Caco-2 (cell line): ENCODE measurements at regions of chr6 and their contacts with region 1.

Region 1: GRCh38 chr6:15245361-15246216 is at the start of gene JARID2:
- DNase-seq: peak; percentile 97 to 99
- H3K4me3 ChIP-seq: peak within 1 kb of the TSS; percentile 97
- H3K4me3 Mint-ChIP-seq: peak within 1 kb of the TSS; percentile 85
- H3K27ac Mint-ChIP-seq: peak within 1 kb of the TSS; percentile 65
- H3K4me1 ChIP-seq: peaks cover 6% of the 10 kb centered on the region
- H3K4me1 Mint-ChIP-seq: no peaks in the 10 kb centered on the region
- H3K27me3 ChIP-seq: no peaks in the 10 kb centered on the region
- H3K27me3 Mint-ChIP-seq: no peaks in the 10 kb centered on the region
- CTCF ChIP-seq: no peak
- total RNA-seq, gene JARID2: 17.0 and 18.3 TPM in 2 replicates

Region 2: DNA sequence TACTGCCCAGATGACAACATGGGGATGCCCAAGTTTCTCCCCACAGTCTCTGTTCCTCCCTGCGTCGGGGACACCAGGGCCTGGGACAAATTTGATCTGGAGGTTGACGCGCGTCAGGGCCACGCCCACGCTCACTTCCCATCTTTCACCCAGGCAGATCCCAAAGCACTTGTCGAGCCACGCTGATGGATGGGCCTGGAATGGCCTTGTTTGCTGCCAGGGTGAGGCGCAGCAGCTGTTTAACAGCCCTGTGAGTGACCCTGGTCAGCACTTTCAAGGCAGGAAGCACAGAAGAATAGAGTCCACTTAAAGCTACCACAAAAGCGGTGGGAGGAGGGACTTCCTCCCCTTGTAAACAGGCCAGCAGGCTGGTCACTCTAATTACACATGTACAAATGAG is 324.4 kb before region 1 on chr6:
- CTCF ChIA-PET with region 1: no interaction called
- POLR2A ChIA-PET with region 1: no interaction called
- intact Hi-C with region 1: no loop called
- DNase-seq: no peak
- H3K4me3 ChIP-seq: no peak overlapping the region
- H3K4me3 Mint-ChIP-seq: no peak overlapping the region
- H3K27ac Mint-ChIP-seq: no peak overlapping the region
- H3K4me1 ChIP-seq: no peaks in the 10 kb centered on the region
- H3K4me1 Mint-ChIP-seq: no peaks in the 10 kb centered on the region
- H3K27me3 ChIP-seq: no peaks in the 10 kb centered on the region
- H3K27me3 Mint-ChIP-seq: no peaks in the 10 kb centered on the region
- CTCF ChIP-seq: no peak

Region 3: DNA sequence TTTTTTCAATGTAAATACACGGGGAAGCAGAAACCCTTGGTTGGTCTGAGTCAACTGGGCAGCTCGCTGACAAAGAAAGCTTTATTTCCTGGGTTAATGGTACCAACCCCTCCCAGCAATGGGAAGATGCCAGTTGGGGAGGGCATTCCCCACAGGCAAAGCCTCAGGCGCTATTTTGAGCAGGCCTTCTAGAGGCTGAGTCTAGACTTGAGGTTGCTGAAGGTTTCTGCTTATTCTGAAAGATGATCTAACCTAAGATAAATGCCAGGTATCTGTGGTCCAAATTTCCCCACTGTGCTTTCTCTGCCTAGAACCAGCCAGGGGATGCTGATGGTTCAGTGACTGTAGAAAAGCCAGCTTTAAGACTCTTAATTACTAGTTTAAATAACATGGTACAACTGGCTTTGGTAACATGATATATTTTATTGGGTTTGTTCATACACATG is 172.2 kb before region 1 on chr6:
- CTCF ChIA-PET with region 1: no interaction called
- POLR2A ChIA-PET with region 1: no interaction called
- intact Hi-C with region 1: no loop called
- DNase-seq: no peak
- H3K4me3 ChIP-seq: no peak overlapping the region
- H3K4me3 Mint-ChIP-seq: no peak overlapping the region
- H3K27ac Mint-ChIP-seq: no peak overlapping the region
- H3K4me1 ChIP-seq: no peaks in the 10 kb centered on the region
- H3K4me1 Mint-ChIP-seq: no peaks in the 10 kb centered on the region
- H3K27me3 ChIP-seq: no peaks in the 10 kb centered on the region
- H3K27me3 Mint-ChIP-seq: no peaks in the 10 kb centered on the region
- CTCF ChIP-seq: no peak

Region 4: GRCh38 chr6:15227827-15228318 is 17.7 kb before region 1 on chr6:
- CTCF ChIA-PET with region 1: no interaction called
- POLR2A ChIA-PET with region 1: no interaction called
- intact Hi-C with region 1: no loop called
- DNase-seq: no peak
- H3K4me3 ChIP-seq: no peak overlapping the region
- H3K4me3 Mint-ChIP-seq: no peak overlapping the region
- H3K27ac Mint-ChIP-seq: no peak overlapping the region
- H3K4me1 ChIP-seq: no peaks in the 10 kb centered on the region
- H3K4me1 Mint-ChIP-seq: no peaks in the 10 kb centered on the region
- H3K27me3 ChIP-seq: no peaks in the 10 kb centered on the region
- H3K27me3 Mint-ChIP-seq: no peaks in the 10 kb centered on the region
- CTCF ChIP-seq: no peak

Region 5: DNA sequence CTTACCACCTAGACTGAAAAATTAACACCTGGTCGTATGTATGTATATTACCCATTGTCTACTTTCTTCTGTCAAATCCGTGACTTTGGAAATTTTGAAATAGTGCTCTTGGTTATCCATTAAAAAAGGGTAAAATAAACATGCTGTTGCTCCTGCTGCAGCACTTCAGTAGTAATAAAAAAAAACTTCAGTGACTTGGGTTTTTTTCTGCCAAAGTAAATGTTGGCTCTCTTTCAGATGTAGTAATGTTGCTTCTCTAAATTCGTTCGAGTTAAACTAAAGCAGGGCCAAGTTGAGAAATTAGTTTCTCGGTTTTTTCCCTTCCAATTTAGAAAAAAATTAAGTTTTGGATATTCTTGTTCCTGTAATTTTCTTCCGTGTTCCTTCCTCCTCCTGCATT is 34.4 kb after region 1 on chr6:
- CTCF ChIA-PET with region 1: interaction called, 5 read pairs
- POLR2A ChIA-PET with region 1: interaction called, 3 read pairs
- intact Hi-C with region 1: loop called (anchors 5 kb)
- DNase-seq: no peak
- H3K4me3 ChIP-seq: no peak overlapping the region
- H3K4me3 Mint-ChIP-seq: peak overlapping the region; percentile 41
- H3K27ac Mint-ChIP-seq: peak overlapping the region; percentile 82
- H3K4me1 ChIP-seq: peaks cover 58% of the 10 kb centered on the region
- H3K4me1 Mint-ChIP-seq: peaks cover 31% of the 10 kb centered on the region
- H3K27me3 ChIP-seq: no peaks in the 10 kb centered on the region
- H3K27me3 Mint-ChIP-seq: no peaks in the 10 kb centered on the region
- CTCF ChIP-seq: no peak

Region 6: GRCh38 chr6:15409301-15410125 is 163.9 kb after region 1 on chr6:
- CTCF ChIA-PET with region 1: no interaction called
- POLR2A ChIA-PET with region 1: interaction called, 13 read pairs
- intact Hi-C with region 1: loop called (anchors 1 kb)
- DNase-seq: peak; percentile 78 to 85
- H3K4me3 ChIP-seq: no peak overlapping the region
- H3K4me3 Mint-ChIP-seq: peak overlapping the region; percentile 58
- H3K27ac Mint-ChIP-seq: peak overlapping the region; percentile 38
- H3K4me1 ChIP-seq: peaks cover 33% of the 10 kb centered on the region
- H3K4me1 Mint-ChIP-seq: peaks cover 49% of the 10 kb centered on the region
- H3K27me3 ChIP-seq: no peaks in the 10 kb centered on the region
- H3K27me3 Mint-ChIP-seq: no peaks in the 10 kb centered on the region
- CTCF ChIP-seq: no peak

Region 7: DNA sequence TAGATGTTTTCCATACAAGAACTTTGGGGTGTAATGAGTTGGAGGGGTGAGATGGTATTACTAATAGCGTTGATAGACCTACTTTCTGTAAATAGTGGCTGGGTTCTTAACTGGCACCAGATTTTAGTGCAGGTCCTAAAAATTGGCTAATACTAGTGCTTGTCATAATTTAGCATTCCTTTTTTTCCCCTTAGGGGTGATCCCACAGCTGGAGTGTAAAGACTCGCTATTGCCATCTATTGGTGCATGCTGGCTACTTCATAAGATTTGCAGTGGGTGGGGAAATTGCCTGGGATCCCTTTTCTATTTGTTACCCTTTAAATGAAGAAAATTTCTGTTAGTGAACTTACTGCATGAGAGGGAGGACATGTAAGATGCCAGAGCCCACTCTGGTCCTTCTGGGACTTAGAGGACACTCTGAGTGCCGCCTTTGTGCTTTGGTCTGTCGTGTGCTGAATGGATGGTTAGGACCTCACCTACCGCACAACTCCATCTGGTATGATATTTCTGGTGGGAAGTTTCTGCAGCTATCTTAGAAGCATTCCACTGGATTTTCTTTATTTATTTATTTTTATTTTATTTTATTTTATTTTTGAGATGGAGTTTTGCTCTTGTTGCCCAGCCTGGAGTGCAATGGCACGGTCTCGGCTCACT is 195.8 kb after region 1 on chr6:
- CTCF ChIA-PET with region 1: no interaction called
- POLR2A ChIA-PET with region 1: no interaction called
- intact Hi-C with region 1: loop called (anchors 10 kb)
- DNase-seq: peak; percentile 40 to 72
- H3K4me3 ChIP-seq: no peak overlapping the region
- H3K4me3 Mint-ChIP-seq: no peak overlapping the region
- H3K27ac Mint-ChIP-seq: no peak overlapping the region
- H3K4me1 ChIP-seq: peaks cover 6% of the 10 kb centered on the region
- H3K4me1 Mint-ChIP-seq: peaks cover 29% of the 10 kb centered on the region
- H3K27me3 ChIP-seq: no peaks in the 10 kb centered on the region
- H3K27me3 Mint-ChIP-seq: no peaks in the 10 kb centered on the region
- CTCF ChIP-seq: peak; percentile 72 to 81